ENCODE measurements at regions of chr1 and their contacts with region 1.

Region 1: DNA sequence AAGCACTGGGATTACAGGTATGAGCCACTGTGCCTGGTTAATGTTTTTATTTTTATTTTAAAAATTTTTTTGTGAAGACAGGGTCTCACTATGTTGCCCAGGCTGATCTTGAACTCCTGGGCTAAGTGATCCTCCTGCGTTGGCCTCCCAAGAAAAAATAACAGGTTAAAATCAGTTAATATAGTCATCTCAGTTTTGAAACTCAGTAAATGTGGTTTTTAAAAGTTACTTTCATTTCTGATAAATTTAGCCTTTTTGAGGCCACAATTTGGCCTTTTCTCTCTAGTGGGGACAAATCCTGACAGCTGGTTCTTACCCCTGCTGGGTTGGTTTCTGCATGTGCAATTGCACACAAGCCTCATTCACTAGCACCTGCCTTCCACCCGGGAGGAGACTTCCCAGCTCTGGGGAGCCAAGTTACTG is 13.3 kb downstream of the PMF1 start:
- DNase-seq: no peak
- H3K4me3 ChIP-seq: no peak overlapping the region
- H3K4me3 Mint-ChIP-seq: no peak overlapping the region
- H3K27ac Mint-ChIP-seq: no peak overlapping the region
- H3K4me1 ChIP-seq: peaks cover 6% of the 10 kb centered on the region; the same call in 1 of the 2 replicates
- H3K4me1 Mint-ChIP-seq: peaks cover 2% of the 10 kb centered on the region
- H3K27me3 ChIP-seq: no peaks in the 10 kb centered on the region
- H3K27me3 Mint-ChIP-seq: no peaks in the 10 kb centered on the region
- CTCF ChIP-seq: no peak

Region 2: GRCh38 chr1:155759966-155760630 is 466.0 kb before region 1 on chr1:
- CTCF ChIA-PET with region 1: no interaction called
- POLR2A ChIA-PET with region 1: no interaction called
- intact Hi-C with region 1: no loop called
- DNase-seq: no peak
- H3K4me3 ChIP-seq: no peak overlapping the region
- H3K4me3 Mint-ChIP-seq: no peak overlapping the region
- H3K27ac Mint-ChIP-seq: no peak overlapping the region
- H3K4me1 ChIP-seq: no peaks in the 10 kb centered on the region
- H3K4me1 Mint-ChIP-seq: no peaks in the 10 kb centered on the region
- H3K27me3 ChIP-seq: no peaks in the 10 kb centered on the region
- H3K27me3 Mint-ChIP-seq: no peaks in the 10 kb centered on the region
- CTCF ChIP-seq: no peak

Region 3: GRCh38 chr1:156096640-156097391 is 129.3 kb before region 1 on chr1:
- CTCF ChIA-PET with region 1: interaction called, 4 read pairs
- POLR2A ChIA-PET with region 1: no interaction called
- intact Hi-C with region 1: loop called (anchors 2 kb)
- DNase-seq: peak; percentile 90 to 92
- H3K4me3 ChIP-seq: no peak overlapping the region
- H3K4me3 Mint-ChIP-seq: no peak overlapping the region
- H3K27ac Mint-ChIP-seq: peak overlapping the region; percentile 96
- H3K4me1 ChIP-seq: peaks cover 27% of the 10 kb centered on the region
- H3K4me1 Mint-ChIP-seq: peaks cover 35% of the 10 kb centered on the region
- H3K27me3 ChIP-seq: no peaks in the 10 kb centered on the region
- H3K27me3 Mint-ChIP-seq: no peaks in the 10 kb centered on the region
- CTCF ChIP-seq: peak; percentile 91 to 96

Region 4: GRCh38 chr1:156136970-156137483 is 89.1 kb before region 1 on chr1:
- CTCF ChIA-PET with region 1: interaction called, 55 read pairs
- POLR2A ChIA-PET with region 1: interaction called, 7 read pairs
- intact Hi-C with region 1: loop called (anchors 1 kb)
- DNase-seq: no peak
- H3K4me3 ChIP-seq: no peak overlapping the region
- H3K4me3 Mint-ChIP-seq: no peak overlapping the region
- H3K27ac Mint-ChIP-seq: peak overlapping the region; percentile 69
- H3K4me1 ChIP-seq: no peaks in the 10 kb centered on the region
- H3K4me1 Mint-ChIP-seq: no peaks in the 10 kb centered on the region
- H3K27me3 ChIP-seq: no peaks in the 10 kb centered on the region
- H3K27me3 Mint-ChIP-seq: no peaks in the 10 kb centered on the region
- CTCF ChIP-seq: peak in 1 of 2 experiments; percentile 49

Region 5: GRCh38 chr1:156177919-156178654 is 48.0 kb before region 1 on chr1:
- CTCF ChIA-PET with region 1: interaction called, 9 read pairs
- POLR2A ChIA-PET with region 1: interaction called, 11 read pairs
- intact Hi-C with region 1: loop called (anchors 1 kb)
- DNase-seq: no peak
- H3K4me3 ChIP-seq: no peak overlapping the region
- H3K4me3 Mint-ChIP-seq: no peak overlapping the region
- H3K27ac Mint-ChIP-seq: peak overlapping the region; percentile 38
- H3K4me1 ChIP-seq: peaks cover 50% of the 10 kb centered on the region
- H3K4me1 Mint-ChIP-seq: peaks cover 27% of the 10 kb centered on the region
- H3K27me3 ChIP-seq: no peaks in the 10 kb centered on the region
- H3K27me3 Mint-ChIP-seq: no peaks in the 10 kb centered on the region
- CTCF ChIP-seq: no peak

Region 6: DNA sequence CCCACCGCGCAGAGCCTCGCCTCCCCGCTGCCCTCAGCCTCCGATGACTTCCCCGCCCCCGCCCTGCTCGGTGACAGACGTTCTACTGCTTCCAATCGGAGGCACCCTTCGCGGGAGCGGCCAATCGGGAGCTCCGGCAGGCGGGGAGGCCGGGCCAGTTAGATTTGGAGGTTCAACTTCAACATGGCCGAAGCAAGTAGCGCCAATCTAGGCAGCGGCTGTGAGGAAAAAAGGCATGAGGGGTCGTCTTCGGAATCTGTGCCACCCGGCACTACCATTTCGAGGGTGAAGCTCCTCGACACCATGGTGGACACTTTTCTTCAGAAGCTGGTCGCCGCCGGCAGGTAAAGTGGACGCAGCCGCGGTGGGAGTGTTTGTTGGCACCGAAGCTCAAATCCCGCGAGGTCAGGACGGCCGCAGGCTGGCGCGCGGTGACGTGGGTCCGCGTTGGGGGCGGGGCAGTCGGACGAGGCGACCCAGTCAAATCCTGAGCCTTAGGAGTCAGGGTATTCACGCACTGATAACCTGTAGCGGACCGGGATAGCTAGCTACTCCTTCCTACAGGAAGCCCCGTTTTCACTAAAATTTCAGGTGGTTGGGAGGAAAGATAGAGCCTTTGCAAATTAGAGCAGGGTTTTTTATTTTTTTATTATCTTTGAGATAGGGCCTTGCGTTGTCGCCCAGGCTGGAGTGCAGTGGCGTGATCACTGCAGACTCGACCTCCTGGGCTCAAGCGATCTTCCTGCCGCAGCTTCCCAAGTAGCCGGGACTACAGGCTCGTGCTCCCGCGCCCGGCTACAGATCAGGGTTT is 13.1 kb before region 1 on chr1 and contains the start of gene PMF1:
- CTCF ChIA-PET with region 1: interaction called, 37 read pairs
- POLR2A ChIA-PET with region 1: interaction called, 24 read pairs
- intact Hi-C with region 1: no loop called
- DNase-seq: peak; percentile 97
- H3K4me3 ChIP-seq: peak within 1 kb of the TSS; percentile 90
- H3K4me3 Mint-ChIP-seq: peak within 1 kb of the TSS; percentile 96
- H3K27ac Mint-ChIP-seq: peak within 1 kb of the TSS; percentile 98
- H3K4me1 ChIP-seq: peaks cover 12% of the 10 kb centered on the region
- H3K4me1 Mint-ChIP-seq: peaks cover 23% of the 10 kb centered on the region
- H3K27me3 ChIP-seq: no peaks in the 10 kb centered on the region
- H3K27me3 Mint-ChIP-seq: no peaks in the 10 kb centered on the region
- CTCF ChIP-seq: no peak
- total RNA-seq, gene PMF1: 90.2 and 95.7 TPM in 2 replicates

Region 7: DNA sequence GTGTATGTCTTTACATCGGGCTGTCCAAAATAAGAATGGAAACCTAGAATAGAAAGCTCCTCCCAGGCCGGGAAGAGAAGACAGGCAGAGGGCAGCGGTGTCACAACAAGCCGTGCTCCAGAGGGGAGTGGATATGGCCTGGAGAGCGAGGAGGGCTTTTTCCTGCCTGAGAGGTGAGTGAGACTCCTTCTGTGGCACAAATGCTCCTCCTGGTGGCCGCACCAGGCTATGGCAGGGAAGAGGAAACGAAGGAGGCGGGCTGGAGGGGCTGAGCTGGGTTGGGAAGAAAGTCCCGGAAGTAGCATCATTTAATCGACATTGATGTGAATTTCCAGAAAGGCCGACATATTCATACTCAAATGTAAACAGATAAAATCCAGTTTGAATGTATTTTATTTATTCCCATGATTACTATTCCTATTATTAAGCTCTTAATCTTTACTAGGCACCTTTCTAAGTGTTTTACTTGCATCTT is 219.7 kb after region 1 on chr1:
- CTCF ChIA-PET with region 1: no interaction called
- POLR2A ChIA-PET with region 1: no interaction called
- intact Hi-C with region 1: no loop called
- DNase-seq: peak; percentile 89 to 92
- H3K4me3 ChIP-seq: no peak overlapping the region
- H3K4me3 Mint-ChIP-seq: no peak overlapping the region
- H3K27ac Mint-ChIP-seq: no peak overlapping the region
- H3K4me1 ChIP-seq: no peaks in the 10 kb centered on the region
- H3K4me1 Mint-ChIP-seq: no peaks in the 10 kb centered on the region
- H3K27me3 ChIP-seq: peaks cover 1% of the 10 kb centered on the region; the same call in 1 of the 2 replicates
- H3K27me3 Mint-ChIP-seq: peaks cover 11% of the 10 kb centered on the region
- CTCF ChIP-seq: peak; percentile 93 to 95

Measured in Caco-2 (cell line).